ENCODE measurements at regions of chr1 and their contacts with region 1.

Region 1: GRCh38 chr1:68590473-68590872 is 93.6 kb upstream of the DEPDC1 start:
- DNase-seq: peak; percentile 16
- H3K4me3 ChIP-seq: no peak overlapping the region
- H3K27ac ChIP-seq: no peak overlapping the region
- H3K4me1 ChIP-seq: no peaks in the 10 kb centered on the region
- H3K27me3 ChIP-seq: no peaks in the 10 kb centered on the region
- CTCF ChIP-seq: peak; percentile 8 to 49

Region 2: DNA sequence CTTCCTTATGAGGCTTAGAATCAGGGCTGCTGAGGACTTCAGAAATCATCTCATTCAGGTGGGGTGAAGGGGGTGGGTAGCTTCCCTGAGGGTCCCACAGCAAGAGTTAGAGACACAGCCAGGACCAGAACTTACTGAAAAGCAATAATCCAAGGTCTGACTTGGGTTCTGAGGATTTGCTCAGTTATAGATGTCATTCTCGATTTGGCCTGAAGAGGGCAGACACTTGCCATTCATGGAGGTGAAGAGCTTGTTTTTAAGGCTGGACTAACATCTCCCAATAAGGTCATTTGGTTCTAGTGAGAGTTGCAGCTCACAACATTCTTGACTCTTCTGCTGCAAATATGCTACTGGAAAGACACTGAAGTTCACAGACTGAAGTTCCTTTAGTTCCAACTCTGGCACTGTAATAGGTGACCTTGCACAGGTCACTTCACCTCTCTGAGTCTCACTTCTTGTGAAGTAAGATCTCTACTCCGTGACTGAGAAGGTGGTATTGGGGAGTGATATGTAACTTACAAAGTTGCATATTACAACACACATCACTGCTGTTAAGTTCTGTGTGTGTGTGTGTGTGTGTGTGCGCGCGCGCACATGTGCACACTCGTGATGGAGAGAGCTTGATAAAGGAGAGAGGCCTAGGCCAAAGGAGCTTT is 470.2 kb before region 1 on chr1:
- CTCF ChIA-PET with region 1: no interaction called
- dilution Hi-C with region 1: no loop called
- in situ Hi-C with region 1: loop called in 1 of 2 experiments (anchors 25 kb)
- intact Hi-C with region 1: loop called (anchors 1 kb)
- DNase-seq: peak; percentile 64
- H3K4me3 ChIP-seq: no peak overlapping the region
- H3K27ac ChIP-seq: no peak overlapping the region
- H3K4me1 ChIP-seq: no peaks in the 10 kb centered on the region
- H3K27me3 ChIP-seq: no peaks in the 10 kb centered on the region
- CTCF ChIP-seq: peak; percentile 76 to 78

Region 3: GRCh38 chr1:68470388-68470970 is 120.0 kb before region 1 on chr1:
- CTCF ChIA-PET with region 1: no interaction called
- dilution Hi-C with region 1: no loop called
- in situ Hi-C with region 1: loop called (anchors 5 to 25 kb)
- intact Hi-C with region 1: loop called (anchors 1 kb)
- DNase-seq: no peak
- H3K4me3 ChIP-seq: no peak overlapping the region
- H3K27ac ChIP-seq: no peak overlapping the region
- H3K4me1 ChIP-seq: no peaks in the 10 kb centered on the region
- H3K27me3 ChIP-seq: no peaks in the 10 kb centered on the region
- CTCF ChIP-seq: peak; percentile 68 to 73

Region 4: GRCh38 chr1:68485431-68486022 is 104.9 kb before region 1 on chr1:
- CTCF ChIA-PET with region 1: no interaction called
- dilution Hi-C with region 1: no loop called
- in situ Hi-C with region 1: no loop called
- intact Hi-C with region 1: no loop called
- DNase-seq: no peak
- H3K4me3 ChIP-seq: no peak overlapping the region
- H3K27ac ChIP-seq: no peak overlapping the region
- H3K4me1 ChIP-seq: no peaks in the 10 kb centered on the region
- H3K27me3 ChIP-seq: no peaks in the 10 kb centered on the region
- CTCF ChIP-seq: peak; percentile 2 to 9

Region 5: GRCh38 chr1:68633141-68633919 is 42.9 kb after region 1 on chr1:
- CTCF ChIA-PET with region 1: no interaction called
- dilution Hi-C with region 1: no loop called
- in situ Hi-C with region 1: no loop called
- intact Hi-C with region 1: no loop called
- DNase-seq: no peak
- H3K4me3 ChIP-seq: no peak overlapping the region
- H3K27ac ChIP-seq: no peak overlapping the region
- H3K4me1 ChIP-seq: no peaks in the 10 kb centered on the region
- H3K27me3 ChIP-seq: no peaks in the 10 kb centered on the region
- CTCF ChIP-seq: no peak

Region 6: GRCh38 chr1:68651115-68651514 is 60.6 kb after region 1 on chr1:
- CTCF ChIA-PET with region 1: no interaction called
- dilution Hi-C with region 1: no loop called
- in situ Hi-C with region 1: no loop called
- intact Hi-C with region 1: no loop called
- DNase-seq: no peak
- H3K4me3 ChIP-seq: no peak overlapping the region
- H3K27ac ChIP-seq: no peak overlapping the region
- H3K4me1 ChIP-seq: no peaks in the 10 kb centered on the region
- H3K27me3 ChIP-seq: no peaks in the 10 kb centered on the region
- CTCF ChIP-seq: no peak

Measured in mammary epithelial cell (primary cell).